ENCODE measurements at regions of chr9 and their contacts with region 1.

Region 1: DNA sequence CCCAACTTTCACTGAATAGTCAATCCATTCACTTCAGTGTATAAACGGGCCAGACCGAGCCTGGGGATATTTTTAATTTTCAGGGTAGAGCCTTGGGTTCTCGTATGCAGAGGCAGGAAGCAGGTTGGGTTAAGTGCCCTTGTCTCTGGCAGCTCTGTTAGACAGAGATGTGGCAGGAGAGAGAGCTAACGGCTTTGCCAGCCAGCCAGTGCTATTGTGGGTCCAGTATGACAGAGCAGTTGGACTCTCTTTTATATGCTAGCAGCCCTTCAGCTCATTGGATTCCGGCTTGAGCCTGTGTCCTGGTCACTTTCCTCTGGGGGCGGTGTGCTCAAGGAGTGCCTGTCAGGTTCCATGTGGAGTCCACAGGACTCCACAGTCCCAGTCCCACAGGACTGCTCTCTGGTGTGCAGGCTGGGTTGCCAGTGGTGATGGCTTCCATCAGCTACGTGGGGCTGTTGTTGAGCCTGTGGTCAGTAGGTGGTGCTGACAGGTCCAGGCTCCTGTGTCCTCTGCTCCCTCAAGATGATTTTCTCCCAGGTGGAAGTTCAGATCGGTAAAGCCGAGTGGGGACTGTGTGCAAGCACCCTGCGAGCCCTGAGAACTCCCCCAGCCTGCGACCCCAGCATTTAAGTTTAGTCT is 14.3 kb downstream of the CLTA start:
- DNase-seq: no peak
- ATAC-seq: peak in 1 of 2 donors; percentile 45

Region 2: DNA sequence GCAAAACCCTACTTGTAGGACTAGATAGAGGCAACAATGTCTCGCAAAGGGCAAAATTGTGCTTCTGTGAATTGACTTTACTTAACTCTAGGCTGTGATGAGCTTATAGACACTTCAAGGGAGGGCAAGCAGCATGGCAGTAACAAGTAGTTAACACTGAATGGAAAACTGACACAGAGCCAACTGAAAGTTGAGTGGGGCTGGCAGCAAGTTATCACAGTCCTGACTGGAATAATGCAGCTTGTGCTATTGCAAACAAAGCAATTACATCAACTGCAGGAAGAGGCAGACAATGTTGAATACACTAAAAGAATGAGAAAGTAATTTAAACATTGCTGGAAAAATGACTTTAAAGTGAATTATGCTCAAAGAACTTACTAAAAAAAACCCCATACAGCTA is 132.8 kb after region 1 on chr9:
- intact Hi-C with region 1: loop called in 1 of 2 experiments (anchors 10 kb)
- DNase-seq: peak; percentile 38
- ATAC-seq: peak; percentile 72 to 80

Region 3: GRCh38 chr9:36398745-36399144 is 193.7 kb after region 1 on chr9:
- intact Hi-C with region 1: no loop called
- DNase-seq: no peak
- ATAC-seq: no peak

Measured in left cardiac atrium (tissue), 4 donors.